ENCODE measurements at regions of chr1 and their contacts with region 1.

Region 1: DNA sequence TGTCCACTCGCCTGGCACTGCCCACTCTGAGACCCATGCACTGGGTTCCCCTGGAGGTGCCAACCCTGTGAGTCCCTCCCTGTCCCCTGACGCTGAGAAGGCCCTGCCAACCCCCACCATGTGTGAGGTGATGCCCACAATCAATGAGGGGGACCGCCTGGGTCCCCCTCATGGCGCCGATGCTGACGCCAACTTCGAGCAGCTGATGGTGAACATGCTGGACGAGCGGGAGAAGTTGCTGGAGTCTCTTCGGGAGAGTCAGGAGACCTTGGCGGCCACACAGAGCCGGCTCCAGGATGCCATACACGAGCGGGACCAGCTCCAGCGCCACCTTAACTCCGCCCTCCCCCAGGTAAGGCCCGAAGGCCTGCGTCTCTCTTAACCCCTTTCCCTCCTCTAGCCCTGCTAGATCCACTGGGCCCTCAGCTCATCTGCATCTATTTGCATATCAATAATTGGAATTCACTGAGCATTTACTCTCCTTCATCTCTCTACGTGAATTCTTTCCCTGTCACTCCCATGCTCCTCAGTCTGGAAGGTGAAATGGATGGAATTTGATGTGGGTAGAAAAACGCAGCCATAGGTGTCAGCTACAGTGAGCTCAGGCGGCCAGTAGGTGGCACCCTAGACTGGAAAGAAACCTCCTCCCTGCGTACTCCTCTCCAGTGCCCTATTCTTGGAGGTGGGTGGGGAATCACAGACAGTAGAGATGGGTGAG is 12.8 kb downstream of the PPFIA4 start:
- DNase-seq: no peak
- H3K4me3 ChIP-seq: no peak overlapping the region
- CTCF ChIP-seq: peak; percentile 92

Region 2: GRCh38 chr1:202688375-202688774 is 350.7 kb before region 1 on chr1:
- CTCF ChIA-PET with region 1: no interaction called
- POLR2A ChIA-PET with region 1: no interaction called
- DNase-seq: no peak
- H3K4me3 ChIP-seq: no peak overlapping the region
- CTCF ChIP-seq: no peak

Region 3: DNA sequence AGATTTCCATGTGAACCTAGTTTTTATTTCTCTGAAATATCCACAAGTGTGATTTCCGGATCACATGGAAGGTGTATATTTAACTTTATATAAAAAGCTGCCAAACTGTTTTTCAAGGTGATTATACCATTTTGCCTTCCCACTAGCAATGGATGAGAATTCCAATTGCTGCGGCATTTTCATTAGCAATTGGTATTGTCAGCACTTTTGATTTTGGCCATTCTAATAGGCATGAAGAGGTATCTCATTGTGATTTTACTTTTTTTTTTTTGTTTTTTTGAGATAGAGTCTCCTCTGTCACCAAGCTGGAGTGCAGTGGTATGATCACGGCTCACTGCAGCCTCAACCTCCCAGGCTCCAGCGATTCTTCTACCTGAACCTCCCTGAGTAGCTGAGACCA is 67.0 kb before region 1 on chr1:
- CTCF ChIA-PET with region 1: no interaction called
- POLR2A ChIA-PET with region 1: no interaction called
- DNase-seq: no peak
- H3K4me3 ChIP-seq: no peak overlapping the region
- CTCF ChIP-seq: no peak

Region 4: GRCh38 chr1:203006948-203007871 is 31.8 kb before region 1 on chr1 and contains the start of gene TMEM183A:
- CTCF ChIA-PET with region 1: interaction called, 17 read pairs
- POLR2A ChIA-PET with region 1: interaction called, 3 read pairs
- DNase-seq: peak; percentile 54
- H3K4me3 ChIP-seq: peak within 1 kb of the TSS; percentile 86
- CTCF ChIP-seq: no peak

Region 5: DNA sequence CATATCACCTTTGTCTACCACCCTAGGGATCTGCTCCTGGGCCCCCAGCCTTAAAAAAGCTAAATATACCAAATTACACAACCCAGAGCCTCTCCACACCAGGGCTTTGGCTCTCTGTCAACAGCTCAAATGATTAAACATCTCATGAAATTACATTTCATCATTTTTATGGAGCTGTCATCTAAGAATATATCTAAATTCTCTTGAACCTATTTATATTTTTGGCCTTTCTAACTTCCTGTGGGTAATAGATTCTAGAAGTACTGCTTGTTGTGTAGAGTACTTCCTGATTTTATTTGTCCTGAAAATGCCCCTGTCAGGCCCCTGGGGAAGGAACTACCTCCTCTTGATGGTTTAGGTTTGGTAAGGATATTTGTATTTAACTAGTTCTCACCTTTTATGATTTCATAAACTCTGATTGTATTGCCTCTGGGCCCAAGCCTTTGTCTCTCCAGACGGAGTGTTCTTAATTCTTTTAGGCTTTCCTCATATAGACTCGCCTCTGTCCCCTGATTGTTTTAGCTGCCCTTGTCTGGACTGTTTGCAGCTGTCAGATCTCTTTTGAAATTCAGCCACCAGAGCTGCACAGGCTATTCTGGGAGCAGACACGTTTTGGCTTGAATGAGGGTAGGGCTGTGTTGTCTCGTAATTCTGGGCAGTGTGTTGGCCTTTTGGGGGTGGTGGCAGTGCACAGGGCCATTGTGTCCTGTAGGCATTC is 30.1 kb after region 1 on chr1:
- CTCF ChIA-PET with region 1: interaction called, 44 read pairs
- POLR2A ChIA-PET with region 1: interaction called, 9 read pairs
- DNase-seq: no peak
- H3K4me3 ChIP-seq: no peak overlapping the region
- CTCF ChIP-seq: no peak

Region 6: GRCh38 chr1:203117611-203118575 is 78.8 kb after region 1 on chr1:
- CTCF ChIA-PET with region 1: interaction called, 56 read pairs
- POLR2A ChIA-PET with region 1: no interaction called
- DNase-seq: no peak
- H3K4me3 ChIP-seq: no peak overlapping the region
- CTCF ChIP-seq: peak; percentile 96

Region 7: DNA sequence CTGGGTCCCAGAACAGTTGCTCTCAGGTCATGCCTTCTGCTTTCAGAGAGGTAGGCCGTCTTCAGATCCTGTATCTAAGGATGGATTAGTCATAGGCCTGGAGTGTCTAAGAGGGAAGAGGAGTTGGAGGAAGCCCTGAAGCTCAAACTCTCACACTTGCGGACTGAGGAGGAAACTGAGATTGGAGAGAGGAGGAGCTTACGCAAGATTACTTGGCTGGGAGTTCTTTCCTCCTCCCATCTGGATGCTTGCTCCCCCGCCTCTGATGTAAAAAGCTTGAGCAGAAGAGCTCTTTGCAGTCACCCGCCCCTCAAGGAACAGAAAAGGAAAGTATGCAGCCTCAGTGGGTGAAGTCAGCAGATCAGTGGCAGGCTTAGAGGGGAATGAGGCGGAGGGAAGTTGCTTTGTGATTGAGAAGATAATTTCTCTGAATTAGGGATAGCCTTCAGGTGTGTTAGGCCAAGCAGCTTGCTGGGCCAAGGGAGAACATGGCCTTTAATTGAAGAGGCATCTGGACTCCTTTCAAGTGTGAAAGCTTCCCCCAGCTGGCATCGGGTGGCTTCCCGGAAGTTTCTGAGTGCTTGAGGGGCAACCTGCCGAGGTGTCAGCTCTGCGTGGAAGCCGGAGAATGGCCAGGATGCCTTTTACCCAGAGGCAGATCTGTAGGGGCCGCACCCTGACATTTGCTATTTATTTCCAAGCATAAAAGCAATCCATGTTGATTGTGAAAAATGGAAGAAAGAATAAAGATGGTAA is 95.1 kb after region 1 on chr1:
- CTCF ChIA-PET with region 1: interaction called, 79 read pairs
- POLR2A ChIA-PET with region 1: no interaction called
- DNase-seq: no peak
- H3K4me3 ChIP-seq: no peak overlapping the region
- CTCF ChIP-seq: no peak

Region 8: DNA sequence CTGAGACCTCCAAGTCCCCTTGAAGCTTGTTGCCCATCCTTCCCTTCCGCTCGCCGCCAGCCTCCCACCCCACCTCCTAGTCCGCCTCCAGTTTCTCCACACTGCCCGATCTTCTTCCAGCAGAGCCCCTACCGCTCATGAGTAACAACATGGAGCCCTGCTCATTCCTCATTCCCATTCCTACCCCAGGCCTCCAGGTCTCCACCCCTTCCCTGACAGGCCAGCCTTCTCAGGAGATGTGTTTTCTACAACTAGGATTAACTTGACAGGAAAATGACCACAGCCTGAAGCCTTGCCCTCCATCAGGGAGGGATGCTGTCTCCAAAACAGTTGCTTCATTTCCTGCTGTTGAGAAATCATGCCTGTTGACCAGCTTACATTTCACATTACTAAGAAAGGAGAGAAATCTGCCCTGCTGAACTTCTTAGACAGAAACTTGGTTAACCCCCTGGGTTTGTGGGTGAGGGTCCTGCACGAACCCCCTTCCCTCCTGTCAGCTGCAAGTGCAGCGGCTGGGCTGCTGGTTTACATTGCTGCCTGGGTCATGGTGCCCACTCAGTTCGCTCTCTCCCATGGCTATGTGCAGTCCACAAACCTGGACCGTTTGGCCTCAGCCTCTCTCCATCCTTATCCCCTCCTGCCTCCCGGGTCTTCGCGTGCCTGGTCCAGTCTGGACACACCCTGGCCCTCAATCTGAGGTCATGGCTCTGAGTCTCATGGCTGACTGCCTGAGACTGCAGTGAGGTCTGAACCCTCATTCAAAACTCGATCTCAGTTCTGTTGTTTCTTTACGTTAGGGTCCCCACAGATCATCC is 163.6 kb after region 1 on chr1:
- CTCF ChIA-PET with region 1: interaction called, 26 read pairs
- POLR2A ChIA-PET with region 1: no interaction called
- DNase-seq: no peak
- H3K4me3 ChIP-seq: no peak overlapping the region
- CTCF ChIP-seq: no peak

Region 9: DNA sequence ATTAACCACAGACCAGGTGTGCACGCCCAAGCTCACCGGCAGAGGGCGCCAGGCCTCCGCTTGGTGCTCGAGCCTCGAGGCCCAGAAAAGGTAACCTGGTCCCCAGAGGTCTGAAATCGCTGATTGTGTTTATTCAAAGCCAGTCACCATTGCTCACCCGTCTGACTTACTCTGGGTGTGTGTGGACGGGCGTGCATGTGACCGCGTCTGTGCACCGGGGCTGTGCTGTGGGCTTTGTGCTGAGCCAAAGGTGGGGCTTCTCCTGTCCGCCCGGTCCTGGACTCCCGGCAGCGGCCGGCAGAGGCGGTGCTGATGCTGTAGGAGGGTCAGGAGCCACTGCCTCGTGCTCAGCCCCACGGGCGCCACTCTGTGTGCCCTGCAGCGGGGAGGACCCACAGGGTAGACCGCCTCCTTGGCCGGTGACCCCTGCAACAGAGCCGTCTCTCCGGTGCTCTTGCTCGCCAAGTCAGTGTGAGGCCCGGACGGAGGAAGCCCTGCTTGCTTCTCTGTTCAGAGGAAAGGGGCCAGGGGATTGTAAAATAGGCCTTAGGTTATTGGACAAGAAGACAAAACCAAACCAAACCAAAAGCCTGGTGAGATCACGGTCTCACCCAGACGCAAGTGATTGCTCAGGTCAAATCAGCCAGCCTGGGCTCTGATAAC is 234.3 kb after region 1 on chr1:
- CTCF ChIA-PET with region 1: interaction called, 392 read pairs
- POLR2A ChIA-PET with region 1: no interaction called
- DNase-seq: peak; percentile 17
- H3K4me3 ChIP-seq: peak overlapping the region; percentile 25
- CTCF ChIP-seq: peak; percentile 96